ENCODE measurements at regions of chr17 and their contacts with region 1.

Region 1: DNA sequence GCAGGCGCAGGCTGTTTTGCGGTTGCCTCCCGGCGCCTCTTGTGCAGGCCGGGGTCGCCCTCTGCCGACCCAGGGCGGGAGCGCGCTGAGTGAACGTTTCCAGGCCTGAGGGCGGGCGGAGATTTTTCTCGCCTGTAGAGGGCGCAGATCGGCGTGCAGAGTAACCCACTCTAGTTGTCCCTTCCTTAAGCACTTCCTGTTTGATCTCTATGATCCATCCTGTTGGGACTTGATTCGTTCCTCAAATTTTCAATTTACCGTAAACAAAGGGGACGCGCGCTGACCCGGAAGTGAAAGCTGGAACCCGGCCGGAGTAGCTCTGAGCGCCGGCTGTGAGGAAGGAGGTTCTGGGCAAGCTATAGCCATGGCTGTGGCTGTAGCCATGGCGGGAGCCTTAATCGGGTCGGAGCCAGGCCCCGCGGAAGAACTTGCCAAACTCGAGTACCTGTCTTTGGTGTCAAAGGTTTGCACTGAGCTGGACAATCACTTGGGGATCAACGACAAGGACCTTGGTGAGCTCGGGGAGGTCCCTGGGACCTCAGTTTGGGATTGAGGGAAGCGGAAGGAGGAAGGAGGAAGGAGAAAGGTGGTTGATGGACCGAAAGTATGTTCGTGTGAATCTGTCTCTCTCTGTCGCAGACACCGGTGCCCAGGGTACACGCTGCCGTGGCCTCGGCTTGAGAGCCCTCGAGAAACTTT is at the start of gene DHX8:
- DNase-seq: peak; percentile 98
- H3K4me3 Mint-ChIP-seq: peak within 1 kb of the TSS; percentile 92
- H3K27ac Mint-ChIP-seq: peak within 1 kb of the TSS; percentile 96
- H3K4me1 Mint-ChIP-seq: peaks cover 8% of the 10 kb centered on the region
- H3K27me3 Mint-ChIP-seq: no peaks in the 10 kb centered on the region
- CTCF ChIP-seq: peak; percentile 100
- total RNA-seq, gene DHX8: 56.9 and 62.1 TPM in 2 replicates

Region 2: GRCh38 chr17:43388359-43389045 is 95.3 kb before region 1 on chr17:
- CTCF ChIA-PET with region 1: interaction called, 374 read pairs
- POLR2A ChIA-PET with region 1: interaction called, 389 read pairs
- intact Hi-C with region 1: no loop called
- DNase-seq: peak; percentile 94
- H3K4me3 Mint-ChIP-seq: peak overlapping the region; percentile 83
- H3K27ac Mint-ChIP-seq: peak overlapping the region; percentile 97
- H3K4me1 Mint-ChIP-seq: peaks cover 18% of the 10 kb centered on the region
- H3K27me3 Mint-ChIP-seq: no peaks in the 10 kb centered on the region
- CTCF ChIP-seq: no peak

Region 3: GRCh38 chr17:43406676-43407645 is 76.9 kb before region 1 on chr17:
- CTCF ChIA-PET with region 1: interaction called, 374 read pairs
- POLR2A ChIA-PET with region 1: interaction called, 389 read pairs
- intact Hi-C with region 1: no loop called
- DNase-seq: no peak
- H3K4me3 Mint-ChIP-seq: no peak overlapping the region
- H3K27ac Mint-ChIP-seq: no peak overlapping the region
- H3K4me1 Mint-ChIP-seq: peaks cover 28% of the 10 kb centered on the region
- H3K27me3 Mint-ChIP-seq: no peaks in the 10 kb centered on the region
- CTCF ChIP-seq: no peak

Region 4: GRCh38 chr17:43442711-43443110 is 41.1 kb before region 1 on chr17:
- CTCF ChIA-PET with region 1: interaction called, 5 read pairs
- POLR2A ChIA-PET with region 1: interaction called, 19 read pairs
- intact Hi-C with region 1: no loop called
- DNase-seq: peak; percentile 66
- H3K4me3 Mint-ChIP-seq: no peak overlapping the region
- H3K27ac Mint-ChIP-seq: no peak overlapping the region
- H3K4me1 Mint-ChIP-seq: peaks cover 22% of the 10 kb centered on the region
- H3K27me3 Mint-ChIP-seq: no peaks in the 10 kb centered on the region
- CTCF ChIP-seq: no peak

Region 5: GRCh38 chr17:43456661-43457361 is 27.0 kb before region 1 on chr17:
- CTCF ChIA-PET with region 1: interaction called, 19 read pairs
- POLR2A ChIA-PET with region 1: interaction called, 31 read pairs
- intact Hi-C with region 1: no loop called
- DNase-seq: peak; percentile 91
- H3K4me3 Mint-ChIP-seq: no peak overlapping the region
- H3K27ac Mint-ChIP-seq: peak overlapping the region; percentile 63
- H3K4me1 Mint-ChIP-seq: peaks cover 21% of the 10 kb centered on the region
- H3K27me3 Mint-ChIP-seq: no peaks in the 10 kb centered on the region
- CTCF ChIP-seq: no peak

Measured in MCF 10A (cell line).